BJ (cell line): ENCODE measurements at regions of chr11 and their contacts with region 1.

Region 1: DNA sequence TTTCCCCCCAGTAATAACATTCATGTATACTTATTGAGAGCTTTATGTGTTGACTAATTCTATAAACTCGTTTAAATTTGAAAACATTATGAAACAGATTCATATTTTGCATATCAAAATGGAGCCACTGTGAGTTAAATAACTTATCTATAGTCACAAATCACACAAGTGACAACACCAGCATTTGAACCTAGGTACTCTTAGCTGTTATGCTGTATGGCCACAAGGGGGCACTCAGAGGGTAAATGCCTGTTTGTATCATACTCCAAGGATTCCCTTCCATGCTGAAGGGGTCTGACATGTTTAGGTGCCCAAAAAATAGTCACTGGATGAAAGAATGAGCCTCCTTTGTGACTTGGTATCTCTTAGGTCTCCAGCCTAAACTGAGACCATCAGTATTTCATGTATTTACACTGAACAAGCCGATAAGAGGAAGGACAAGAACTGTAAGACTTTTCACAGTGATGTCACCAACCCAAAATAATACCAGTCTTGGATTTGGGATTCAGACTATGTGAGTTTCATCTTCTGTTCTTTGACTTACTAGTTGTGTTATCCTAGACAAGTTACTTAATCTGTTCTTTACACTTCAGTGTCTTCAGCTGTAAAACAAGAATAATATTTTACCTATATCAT is 12.2 kb upstream of the OR52D1 start:
- DNase-seq: no peak
- H3K4me3 ChIP-seq: no peak overlapping the region
- H3K27me3 ChIP-seq: no peaks in the 10 kb centered on the region
- CTCF ChIP-seq: peak; percentile 83

Region 2: GRCh38 chr11:4684631-4685285 is 791.5 kb before region 1 on chr11:
- CTCF ChIA-PET with region 1: no interaction called
- POLR2A ChIA-PET with region 1: no interaction called
- DNase-seq: no peak
- H3K4me3 ChIP-seq: no peak overlapping the region
- H3K27me3 ChIP-seq: no peaks in the 10 kb centered on the region
- CTCF ChIP-seq: no peak

Region 3: DNA sequence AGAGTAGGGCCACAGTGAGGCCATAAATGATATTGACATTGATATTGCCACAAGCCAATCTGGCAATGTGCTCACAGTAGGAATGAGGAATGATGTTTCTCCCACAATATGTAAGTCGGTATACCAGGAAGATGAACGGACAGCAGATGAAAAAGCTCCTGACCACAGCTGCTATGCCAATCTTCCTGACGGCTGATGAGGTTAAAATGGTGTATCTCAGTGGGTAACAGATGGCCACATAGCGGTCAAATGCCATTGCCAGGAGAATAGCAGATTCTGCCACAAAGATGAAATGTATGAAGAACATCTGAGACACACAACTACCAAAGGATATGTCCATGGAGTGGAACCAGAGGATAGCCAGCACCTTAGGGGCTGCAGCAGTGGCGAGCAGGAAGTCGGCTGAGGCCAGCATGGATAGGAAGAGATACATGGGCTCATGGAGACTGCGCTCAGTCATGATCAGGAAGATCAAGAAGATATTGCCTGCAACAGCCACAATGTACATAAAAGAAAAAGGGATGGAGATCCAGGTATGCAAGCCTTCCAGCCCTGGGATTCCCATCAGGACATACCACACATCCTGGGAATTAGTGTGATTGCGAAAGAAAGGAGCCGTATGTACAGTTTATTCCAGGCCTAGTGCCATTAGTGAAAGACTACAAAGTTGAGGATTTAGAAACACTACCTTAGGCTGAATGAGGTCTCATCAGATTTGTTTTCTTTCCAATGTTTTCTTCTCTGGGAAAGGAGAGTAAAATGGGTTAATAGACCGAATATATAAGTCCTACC is 298.1 kb before region 1 on chr11:
- CTCF ChIA-PET with region 1: no interaction called
- POLR2A ChIA-PET with region 1: no interaction called
- DNase-seq: no peak
- H3K4me3 ChIP-seq: no peak overlapping the region
- H3K27me3 ChIP-seq: no peaks in the 10 kb centered on the region
- CTCF ChIP-seq: no peak

Region 4: DNA sequence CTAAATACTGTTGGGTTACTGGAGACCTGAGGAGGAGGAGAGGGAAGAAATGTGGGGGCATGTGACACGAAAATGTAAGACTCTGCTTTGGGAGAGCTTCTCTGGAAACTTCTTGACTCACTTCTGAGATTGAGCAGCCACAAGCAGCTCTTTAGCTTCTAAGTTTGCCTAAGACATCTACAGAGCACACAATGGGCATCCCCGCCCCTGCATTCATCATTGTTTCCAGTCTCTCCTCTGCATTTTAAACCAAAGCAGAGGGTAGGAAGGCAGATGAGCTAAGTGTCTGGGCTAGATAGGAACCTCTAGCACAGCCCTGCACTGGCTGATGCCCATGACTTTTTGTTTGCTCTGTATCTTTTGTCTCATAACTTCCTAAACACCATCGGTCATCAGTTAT is 10.1 kb after region 1 on chr11:
- CTCF ChIA-PET with region 1: interaction called, 12 read pairs
- POLR2A ChIA-PET with region 1: no interaction called
- DNase-seq: no peak
- H3K4me3 ChIP-seq: no peak overlapping the region
- H3K27me3 ChIP-seq: no peaks in the 10 kb centered on the region; the same call in none of the 2 replicates
- CTCF ChIP-seq: no peak

Region 5: GRCh38 chr11:5808500-5809121 is 332.3 kb after region 1 on chr11 and contains the start of gene OR52N2:
- CTCF ChIA-PET with region 1: interaction called, 14 read pairs
- POLR2A ChIA-PET with region 1: interaction called, 9 read pairs
- DNase-seq: no peak
- H3K4me3 ChIP-seq: peak within 1 kb of the TSS; percentile 39
- H3K27me3 ChIP-seq: peaks cover 4% of the 10 kb centered on the region; the same call in 1 of the 2 replicates
- CTCF ChIP-seq: peak; percentile 84
- polyA plus RNA-seq, gene OR52N2: not detected in 2 replicates